ENCODE measurements at regions of chr7 and their contacts with region 1.

Region 1: GRCh38 chr7:157612664-157613561 is 276.1 kb downstream of the DNAJB6 start:
- DNase-seq: peak; percentile 78
- ATAC-seq: peak; percentile 81
- H3K4me3 Mint-ChIP-seq: peak overlapping the region; percentile 72
- H3K27ac Mint-ChIP-seq: peak overlapping the region; percentile 80
- H3K4me1 Mint-ChIP-seq: peaks cover 10% of the 10 kb centered on the region
- H3K27me3 Mint-ChIP-seq: no peaks in the 10 kb centered on the region

Region 2: GRCh38 chr7:157432957-157433576 is 179.8 kb before region 1 on chr7:
- CTCF ChIA-PET with region 1: no interaction called
- POLR2A ChIA-PET with region 1: no interaction called
- intact Hi-C with region 1: loop called in 1 of 2 experiments (anchors 5 kb)
- DNase-seq: peak; percentile 77
- ATAC-seq: peak; percentile 67
- H3K4me3 Mint-ChIP-seq: peak overlapping the region; percentile 41
- H3K27ac Mint-ChIP-seq: no peak overlapping the region
- H3K4me1 Mint-ChIP-seq: peaks cover 13% of the 10 kb centered on the region
- H3K27me3 Mint-ChIP-seq: no peaks in the 10 kb centered on the region

Region 3: GRCh38 chr7:157474689-157475088 is 138.2 kb before region 1 on chr7:
- CTCF ChIA-PET with region 1: no interaction called
- POLR2A ChIA-PET with region 1: no interaction called
- intact Hi-C with region 1: loop called in 1 of 2 experiments (anchors 5 kb)
- DNase-seq: peak; percentile 62
- ATAC-seq: no peak
- H3K4me3 Mint-ChIP-seq: no peak overlapping the region
- H3K27ac Mint-ChIP-seq: no peak overlapping the region
- H3K4me1 Mint-ChIP-seq: peaks cover 53% of the 10 kb centered on the region
- H3K27me3 Mint-ChIP-seq: no peaks in the 10 kb centered on the region

Region 4: GRCh38 chr7:157495594-157495993 is 117.3 kb before region 1 on chr7:
- CTCF ChIA-PET with region 1: no interaction called
- POLR2A ChIA-PET with region 1: no interaction called
- intact Hi-C with region 1: loop called in 1 of 2 experiments (anchors 5 kb)
- DNase-seq: peak; percentile 38
- ATAC-seq: peak; percentile 45
- H3K4me3 Mint-ChIP-seq: no peak overlapping the region
- H3K27ac Mint-ChIP-seq: no peak overlapping the region
- H3K4me1 Mint-ChIP-seq: peaks cover 35% of the 10 kb centered on the region
- H3K27me3 Mint-ChIP-seq: peaks cover 9% of the 10 kb centered on the region

Region 5: DNA sequence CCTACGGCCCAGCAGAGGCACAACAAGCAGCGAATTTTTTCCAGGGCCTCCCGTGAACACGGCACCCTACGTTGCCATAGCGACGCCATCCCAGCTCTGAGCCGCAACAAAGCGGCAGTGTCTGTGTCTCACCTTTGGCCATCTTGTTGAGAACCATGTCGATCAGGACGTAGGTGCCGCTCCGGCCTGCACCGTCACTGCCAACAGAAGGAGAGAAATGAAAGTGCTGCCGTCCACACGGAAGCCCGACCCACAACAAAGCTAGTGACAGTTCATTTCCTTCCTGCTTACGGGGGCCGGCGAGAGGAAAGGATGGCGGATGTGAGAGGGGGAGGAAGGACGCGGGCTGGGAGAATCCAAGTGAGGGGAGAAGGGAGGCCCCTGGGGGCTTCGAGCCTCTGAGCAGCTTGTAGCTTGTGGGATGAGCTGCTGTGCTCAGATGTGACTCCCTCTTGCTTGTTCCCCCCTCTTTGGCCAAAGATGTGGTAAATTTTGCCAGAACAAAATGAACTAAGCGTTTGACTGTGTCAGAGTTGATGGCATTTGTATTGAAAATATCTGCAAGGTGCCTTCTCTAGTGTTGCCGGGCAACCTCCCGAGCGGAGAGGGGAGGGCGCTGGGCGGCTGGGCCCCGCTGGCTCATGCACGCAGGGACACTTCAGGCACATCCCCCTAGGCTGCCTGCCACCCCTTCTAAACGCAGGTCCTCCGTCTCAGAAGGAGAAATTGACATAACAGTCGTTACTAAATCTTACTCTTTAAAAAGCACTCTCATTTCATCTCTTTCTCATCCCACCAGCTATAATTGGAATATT is 43.9 kb before region 1 on chr7:
- CTCF ChIA-PET with region 1: no interaction called
- POLR2A ChIA-PET with region 1: no interaction called
- intact Hi-C with region 1: loop called in 1 of 2 experiments (anchors 5 kb)
- DNase-seq: peak; percentile 80
- ATAC-seq: peak; percentile 74
- H3K4me3 Mint-ChIP-seq: peak overlapping the region; percentile 63
- H3K27ac Mint-ChIP-seq: peak overlapping the region; percentile 55
- H3K4me1 Mint-ChIP-seq: peaks cover 33% of the 10 kb centered on the region
- H3K27me3 Mint-ChIP-seq: no peaks in the 10 kb centered on the region

Region 6: GRCh38 chr7:157595086-157595855 is 17.6 kb before region 1 on chr7:
- CTCF ChIA-PET with region 1: no interaction called
- POLR2A ChIA-PET with region 1: no interaction called
- intact Hi-C with region 1: no loop called
- DNase-seq: no peak
- ATAC-seq: no peak
- H3K4me3 Mint-ChIP-seq: no peak overlapping the region
- H3K27ac Mint-ChIP-seq: no peak overlapping the region
- H3K4me1 Mint-ChIP-seq: no peaks in the 10 kb centered on the region
- H3K27me3 Mint-ChIP-seq: no peaks in the 10 kb centered on the region

Region 7: GRCh38 chr7:157875230-157876179 is 262.6 kb after region 1 on chr7:
- CTCF ChIA-PET with region 1: no interaction called
- POLR2A ChIA-PET with region 1: no interaction called
- intact Hi-C with region 1: loop called in 1 of 2 experiments (anchors 10 kb)
- DNase-seq: peak; percentile 76
- ATAC-seq: peak; percentile 83
- H3K4me3 Mint-ChIP-seq: peak overlapping the region; percentile 57
- H3K27ac Mint-ChIP-seq: peak overlapping the region; percentile 2
- H3K4me1 Mint-ChIP-seq: peaks cover 29% of the 10 kb centered on the region
- H3K27me3 Mint-ChIP-seq: peaks cover 2% of the 10 kb centered on the region

Measured in activated CD4-positive, alpha-beta T cell treated with anti-CD3 and anti-CD28 coated beads for 36 hours (primary cell).